T-cell (primary cell): ENCODE measurements at regions of chr20 and their contacts with region 1.

Region 1: DNA sequence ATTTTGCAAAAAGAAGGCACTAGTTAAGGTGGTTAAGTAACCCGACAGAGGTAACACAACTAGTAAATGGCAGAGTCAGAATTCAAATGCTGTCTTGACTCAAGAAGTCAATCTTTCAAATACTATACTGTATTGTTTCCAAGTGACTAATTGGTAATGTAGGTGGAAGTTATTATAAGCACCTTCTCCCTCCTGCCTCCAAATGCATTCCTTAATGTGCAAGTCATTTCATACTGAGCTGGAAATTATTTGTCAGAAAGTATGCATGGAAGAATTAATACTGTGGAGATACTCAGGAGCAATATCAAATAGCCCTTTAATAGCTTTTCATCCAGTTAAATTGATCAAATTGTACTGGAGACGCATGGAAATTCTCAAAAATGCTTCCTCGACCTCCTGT is 579.1 kb downstream of the DOK5 start:
- DNase-seq: no peak
- ATAC-seq: no peak
- H3K4me3 ChIP-seq: no peak overlapping the region
- H3K4me3 Mint-ChIP-seq: no peak overlapping the region
- H3K27ac ChIP-seq: no peak overlapping the region
- H3K27ac Mint-ChIP-seq: no peak overlapping the region
- H3K4me1 ChIP-seq: no peaks in the 10 kb centered on the region
- H3K4me1 Mint-ChIP-seq: no peaks in the 10 kb centered on the region
- H3K27me3 ChIP-seq: no peaks in the 10 kb centered on the region
- H3K27me3 Mint-ChIP-seq: no peaks in the 10 kb centered on the region

Region 2: DNA sequence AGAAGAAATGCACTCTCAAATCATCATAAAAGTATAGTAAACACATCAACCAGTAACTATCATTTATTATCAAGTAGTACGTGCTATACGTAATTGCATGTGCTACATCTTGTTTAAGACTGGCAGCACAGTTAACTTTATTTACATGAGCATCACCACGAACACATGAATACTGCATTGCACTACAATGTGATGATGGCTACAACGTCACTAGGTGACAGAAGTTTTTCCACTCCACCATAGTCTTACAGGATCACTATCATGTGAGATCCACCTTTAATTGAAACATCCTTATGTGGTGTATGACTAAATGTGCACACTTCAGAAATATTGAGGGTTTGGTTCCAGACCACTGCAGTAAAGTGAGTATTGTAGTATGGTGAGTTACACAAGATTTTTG is 97.1 kb before region 1 on chr20:
- CTCF ChIA-PET with region 1: interaction called in 1 of 2 experiments, 11 read pairs
- POLR2A ChIA-PET with region 1: no interaction called
- DNase-seq: no peak
- ATAC-seq: no peak
- H3K4me3 ChIP-seq: no peak overlapping the region
- H3K4me3 Mint-ChIP-seq: no peak overlapping the region
- H3K27ac ChIP-seq: no peak overlapping the region
- H3K27ac Mint-ChIP-seq: no peak overlapping the region
- H3K4me1 ChIP-seq: no peaks in the 10 kb centered on the region
- H3K4me1 Mint-ChIP-seq: no peaks in the 10 kb centered on the region
- H3K27me3 ChIP-seq: no peaks in the 10 kb centered on the region
- H3K27me3 Mint-ChIP-seq: no peaks in the 10 kb centered on the region

Region 3: DNA sequence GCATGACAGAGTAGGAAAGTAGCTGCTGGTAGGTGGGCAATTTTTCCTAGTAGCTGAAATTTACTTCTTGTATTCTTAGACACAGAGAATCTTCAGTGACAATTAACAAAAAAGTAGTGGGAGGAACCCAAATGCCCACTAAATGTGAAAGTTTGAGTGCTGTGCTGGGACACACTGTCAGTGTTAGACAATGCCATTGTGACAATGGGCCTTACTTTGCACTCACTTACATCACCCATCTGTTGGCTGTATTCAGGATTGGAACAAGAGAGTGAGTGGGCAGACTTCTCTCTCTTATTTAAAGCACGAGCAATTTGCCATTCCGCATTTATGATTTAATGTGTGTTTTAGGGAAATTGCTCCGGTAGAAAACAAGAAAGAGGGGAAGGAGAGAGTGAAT is 288.4 kb after region 1 on chr20:
- CTCF ChIA-PET with region 1: no interaction called
- POLR2A ChIA-PET with region 1: no interaction called
- DNase-seq: no peak
- ATAC-seq: no peak
- H3K4me3 ChIP-seq: no peak overlapping the region
- H3K4me3 Mint-ChIP-seq: no peak overlapping the region
- H3K27ac ChIP-seq: no peak overlapping the region
- H3K27ac Mint-ChIP-seq: no peak overlapping the region
- H3K4me1 ChIP-seq: no peaks in the 10 kb centered on the region
- H3K4me1 Mint-ChIP-seq: no peaks in the 10 kb centered on the region
- H3K27me3 ChIP-seq: no peaks in the 10 kb centered on the region
- H3K27me3 Mint-ChIP-seq: no peaks in the 10 kb centered on the region